ENCODE measurements at regions of chr1 and their contacts with region 1.

Region 1: GRCh38 chr1:178031856-178032320 is 62.0 kb upstream of the RASAL2 start:
- DNase-seq: peak; percentile 84
- H3K4me3 ChIP-seq: no peak overlapping the region
- H3K27ac ChIP-seq: peak overlapping the region; percentile 95
- H3K4me1 ChIP-seq: peaks cover 86% of the 10 kb centered on the region
- H3K27me3 ChIP-seq: no peaks in the 10 kb centered on the region
- CTCF ChIP-seq: peak; percentile 90

Region 2: DNA sequence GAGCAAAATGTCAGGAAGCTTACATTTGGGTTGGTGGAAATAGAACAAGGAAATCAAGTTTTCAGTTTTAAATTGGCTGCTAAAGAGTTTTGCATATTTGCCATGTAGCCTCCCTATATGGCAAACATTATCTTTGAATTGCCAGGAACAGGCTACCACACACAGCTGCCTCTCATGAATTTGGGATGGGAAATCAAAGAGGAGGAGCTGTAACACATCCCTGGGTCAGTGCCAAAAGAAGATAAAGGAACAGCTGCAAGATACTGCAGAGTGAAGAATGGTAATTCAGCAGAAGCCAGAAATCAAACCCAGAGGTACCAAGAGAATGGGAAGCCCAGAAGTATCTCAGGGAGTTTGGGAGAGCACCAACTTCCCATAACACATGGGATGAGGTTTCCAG is 43.4 kb after region 1 on chr1:
- intact Hi-C with region 1: no loop called
- DNase-seq: no peak
- H3K4me3 ChIP-seq: no peak overlapping the region
- H3K27ac ChIP-seq: no peak overlapping the region
- H3K4me1 ChIP-seq: no peaks in the 10 kb centered on the region
- H3K27me3 ChIP-seq: no peaks in the 10 kb centered on the region
- CTCF ChIP-seq: no peak

Region 3: DNA sequence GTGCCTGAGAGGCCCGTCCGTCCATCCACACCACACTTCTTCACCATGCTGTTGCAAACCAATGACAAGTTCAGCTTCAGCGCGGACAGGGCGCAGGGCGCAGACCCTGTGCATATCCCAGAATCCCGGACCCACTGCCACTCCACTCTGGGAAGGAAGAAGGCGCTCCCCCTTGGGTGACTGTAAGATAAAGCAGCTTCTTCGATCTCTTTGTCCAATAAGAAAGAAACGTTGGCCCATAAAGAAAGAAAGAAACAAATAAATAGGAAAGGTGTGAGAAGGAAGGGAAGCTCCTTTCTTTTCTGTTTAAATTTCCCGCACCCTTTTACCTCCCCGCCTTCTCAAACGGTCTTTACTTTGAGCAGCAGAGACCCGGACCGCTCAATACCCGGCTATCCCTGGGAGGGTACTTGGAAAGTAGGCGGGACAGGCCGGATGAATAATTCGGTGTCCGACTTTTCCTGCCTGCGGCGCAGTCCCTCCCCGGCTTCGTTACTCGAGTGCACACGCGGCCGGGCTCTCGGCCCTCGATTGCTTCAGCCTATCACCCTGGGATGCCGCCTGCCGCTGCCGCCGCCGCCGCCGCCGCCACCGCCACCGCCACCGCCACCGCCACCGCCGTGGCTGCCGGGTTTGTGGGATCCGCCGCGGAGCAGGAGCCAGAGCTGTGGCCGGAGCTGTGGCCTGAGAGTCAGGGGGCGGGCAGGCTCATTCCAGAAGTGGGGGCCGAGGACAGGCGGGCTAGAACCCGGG is 61.5 kb after region 1 on chr1:
- intact Hi-C with region 1: loop called (anchors 10 kb)
- DNase-seq: peak; percentile 93
- H3K4me3 ChIP-seq: peak overlapping the region; percentile 87
- H3K27ac ChIP-seq: peak overlapping the region; percentile 97
- H3K4me1 ChIP-seq: peaks cover 57% of the 10 kb centered on the region
- H3K27me3 ChIP-seq: no peaks in the 10 kb centered on the region
- CTCF ChIP-seq: no peak

Region 4: GRCh38 chr1:178282949-178283367 is 251.1 kb after region 1 on chr1:
- intact Hi-C with region 1: loop called (anchors 5 kb)
- DNase-seq: no peak
- H3K4me3 ChIP-seq: no peak overlapping the region
- H3K27ac ChIP-seq: no peak overlapping the region
- H3K4me1 ChIP-seq: peaks cover 62% of the 10 kb centered on the region
- H3K27me3 ChIP-seq: no peaks in the 10 kb centered on the region
- CTCF ChIP-seq: peak; percentile 65

Measured in left ventricle myocardium inferior (tissue), 1 donor.